ENCODE measurements at regions of chr16 and their contacts with region 1.

Region 1: GRCh38 chr16:75519881-75520280 is 16.0 kb downstream of the CHST5 start:
- DNase-seq: no peak
- ATAC-seq: no peak
- H3K4me3 ChIP-seq: no peak overlapping the region
- H3K4me3 Mint-ChIP-seq: no peak overlapping the region
- H3K27ac ChIP-seq: no peak overlapping the region
- H3K27ac Mint-ChIP-seq: no peak overlapping the region
- H3K4me1 ChIP-seq: peaks cover 4% of the 10 kb centered on the region
- H3K4me1 Mint-ChIP-seq: peaks cover 16% of the 10 kb centered on the region
- H3K27me3 ChIP-seq: no peaks in the 10 kb centered on the region
- H3K27me3 Mint-ChIP-seq: no peaks in the 10 kb centered on the region
- CTCF ChIP-seq: no peak

Region 2: GRCh38 chr16:75148311-75149195 is 371.3 kb before region 1 on chr16 and contains the start of gene ZFP1:
- CTCF ChIA-PET with region 1: no interaction called
- POLR2A ChIA-PET with region 1: no interaction called
- intact Hi-C with region 1: loop called in 1 of 2 experiments (anchors 2 kb)
- DNase-seq: peak; percentile 86 to 98 (median 95)
- ATAC-seq: peak; percentile 89
- H3K4me3 ChIP-seq: peak within 1 kb of the TSS; percentile 85 to 100
- H3K4me3 Mint-ChIP-seq: peak within 1 kb of the TSS; percentile 87
- H3K27ac ChIP-seq: peak within 1 kb of the TSS; percentile 84
- H3K27ac Mint-ChIP-seq: peak within 1 kb of the TSS; percentile 88
- H3K4me1 ChIP-seq: peaks cover 12% of the 10 kb centered on the region
- H3K4me1 Mint-ChIP-seq: peaks cover 16% of the 10 kb centered on the region
- H3K27me3 ChIP-seq: no peaks in the 10 kb centered on the region
- H3K27me3 Mint-ChIP-seq: no peaks in the 10 kb centered on the region
- CTCF ChIP-seq: no peak
- total RNA-seq, gene ZFP1: 11.9 to 12.9 TPM

Region 3: DNA sequence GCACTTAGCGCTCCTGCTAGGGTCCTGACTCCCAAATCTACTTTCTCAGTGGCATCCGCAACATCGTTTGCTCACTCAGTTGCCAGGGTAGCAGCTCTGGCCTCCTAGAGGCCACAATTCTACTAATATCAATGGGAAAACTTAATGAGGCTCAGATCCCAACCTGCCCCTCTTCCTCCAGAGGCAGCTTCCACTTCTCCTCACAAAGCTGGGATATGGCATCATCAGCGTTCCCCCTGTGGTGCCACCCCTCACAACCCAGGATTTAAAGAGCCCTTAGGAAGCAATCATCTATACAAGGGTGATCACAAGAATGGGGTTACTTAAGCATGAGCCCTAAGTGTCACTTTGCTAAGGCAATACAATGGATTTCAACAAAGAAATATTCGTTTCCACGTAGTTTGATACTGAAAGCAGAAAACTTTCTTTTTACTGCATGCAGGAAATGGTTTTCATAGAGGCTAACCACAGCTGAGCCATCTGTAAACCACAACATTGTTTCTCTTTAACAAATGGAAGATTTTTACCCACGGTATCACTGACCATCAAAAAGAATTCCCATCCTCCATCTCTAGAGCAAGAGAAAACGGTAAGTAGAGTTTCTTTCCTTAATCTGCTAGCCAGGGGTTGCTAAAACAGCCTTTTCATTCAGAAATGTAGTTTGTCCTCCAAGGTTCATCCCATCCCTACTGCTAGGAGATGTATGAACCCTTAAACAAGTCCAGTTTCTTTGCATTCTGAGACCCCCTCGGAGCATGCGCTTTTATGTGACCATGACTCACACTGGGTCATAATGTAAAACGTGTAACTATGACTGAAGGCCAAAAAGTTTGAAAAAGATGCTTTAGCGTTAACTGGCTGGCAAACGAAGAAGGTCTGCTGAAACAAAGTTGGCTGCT is 200.1 kb before region 1 on chr16:
- CTCF ChIA-PET with region 1: no interaction called
- POLR2A ChIA-PET with region 1: no interaction called
- intact Hi-C with region 1: no loop called
- DNase-seq: peak in 2 of 9 experiments; percentile 20 to 45
- ATAC-seq: no peak
- H3K4me3 ChIP-seq: peak overlapping the region; percentile 21 to 28
- H3K4me3 Mint-ChIP-seq: peak overlapping the region; percentile 65
- H3K27ac ChIP-seq: no peak overlapping the region
- H3K27ac Mint-ChIP-seq: no peak overlapping the region
- H3K4me1 ChIP-seq: peaks cover 18% of the 10 kb centered on the region
- H3K4me1 Mint-ChIP-seq: peaks cover 31% of the 10 kb centered on the region
- H3K27me3 ChIP-seq: peaks cover 0 to 2% of the 10 kb centered on the region in 2 experiments
- H3K27me3 Mint-ChIP-seq: no peaks in the 10 kb centered on the region
- CTCF ChIP-seq: no peak

Region 4: DNA sequence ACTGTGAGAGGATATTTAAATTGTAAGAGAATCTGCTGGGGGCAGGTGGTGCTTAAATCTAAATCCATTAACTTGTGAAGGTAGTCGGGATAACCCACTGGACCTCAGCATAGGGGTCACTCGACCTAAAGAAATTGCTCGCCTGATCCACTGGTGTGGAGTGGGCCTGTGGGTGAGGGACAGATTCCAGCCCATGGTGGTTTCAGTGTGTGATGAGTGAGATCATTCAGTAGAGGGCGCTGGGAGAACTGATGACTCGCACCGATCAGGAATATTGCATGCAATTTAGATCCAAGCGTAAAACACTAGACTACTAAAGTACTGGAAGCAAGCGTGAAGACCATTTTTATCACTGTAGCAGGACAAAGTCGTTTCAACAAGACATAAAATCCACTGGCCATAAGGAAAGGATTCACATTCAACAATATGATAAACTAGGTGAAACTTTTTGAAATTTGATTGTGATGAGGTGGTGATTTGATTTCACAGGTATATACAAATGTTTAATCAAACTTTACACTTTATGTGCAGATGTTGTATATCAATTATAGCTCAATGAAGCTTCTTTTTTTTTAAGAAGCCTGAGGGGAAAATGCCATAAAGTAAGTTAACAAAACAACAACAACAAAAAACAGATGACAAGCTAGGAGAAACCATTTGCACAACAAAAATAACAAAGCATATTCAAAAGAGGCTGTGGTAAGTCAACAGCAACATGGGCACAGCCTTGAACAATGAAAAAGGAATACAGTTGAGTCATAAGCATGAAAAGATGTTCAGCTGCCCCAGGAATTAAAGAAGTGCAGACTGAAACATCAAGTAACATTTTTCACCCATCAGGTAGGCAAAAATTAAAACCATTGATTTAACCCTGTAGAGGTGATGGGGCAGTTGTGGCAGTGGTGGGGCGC is 47.9 kb before region 1 on chr16:
- CTCF ChIA-PET with region 1: interaction called, 13 read pairs
- POLR2A ChIA-PET with region 1: no interaction called
- intact Hi-C with region 1: no loop called
- DNase-seq: peak in 7 of 9 experiments; percentile 17 to 71 (median 47)
- ATAC-seq: peak; percentile 83
- H3K4me3 ChIP-seq: no peak overlapping the region
- H3K4me3 Mint-ChIP-seq: no peak overlapping the region
- H3K27ac ChIP-seq: no peak overlapping the region
- H3K27ac Mint-ChIP-seq: no peak overlapping the region
- H3K4me1 ChIP-seq: no peaks in the 10 kb centered on the region
- H3K4me1 Mint-ChIP-seq: no peaks in the 10 kb centered on the region
- H3K27me3 ChIP-seq: no peaks in the 10 kb centered on the region
- H3K27me3 Mint-ChIP-seq: peaks cover 6% of the 10 kb centered on the region
- CTCF ChIP-seq: peak; percentile 54

Region 5: GRCh38 chr16:75555707-75556430 is 36.0 kb after region 1 on chr16 and contains the start of gene TMEM231:
- CTCF ChIA-PET with region 1: interaction called, 11 read pairs
- POLR2A ChIA-PET with region 1: no interaction called
- intact Hi-C with region 1: loop called (anchors 1 to 2 kb)
- DNase-seq: peak; percentile 95 to 98 (median 97)
- ATAC-seq: peak; percentile 96
- H3K4me3 ChIP-seq: peak within 1 kb of the TSS; percentile 61 to 69
- H3K4me3 Mint-ChIP-seq: peak within 1 kb of the TSS; percentile 86
- H3K27ac ChIP-seq: peak within 1 kb of the TSS; percentile 65 to 70
- H3K27ac Mint-ChIP-seq: peak within 1 kb of the TSS; percentile 88
- H3K4me1 ChIP-seq: peaks cover 12% of the 10 kb centered on the region
- H3K4me1 Mint-ChIP-seq: peaks cover 14% of the 10 kb centered on the region
- H3K27me3 ChIP-seq: no peaks in the 10 kb centered on the region
- H3K27me3 Mint-ChIP-seq: peaks cover 9% of the 10 kb centered on the region
- CTCF ChIP-seq: no peak
- total RNA-seq, gene TMEM231: 2.1 to 2.8 TPM

Region 6: GRCh38 chr16:75566040-75566810 is 46.3 kb after region 1 on chr16 and contains the start of gene GABARAPL2:
- CTCF ChIA-PET with region 1: interaction called, 22 read pairs
- POLR2A ChIA-PET with region 1: interaction called, 6 read pairs
- intact Hi-C with region 1: loop called (anchors 1 kb)
- DNase-seq: peak; percentile 84 to 96 (median 91)
- ATAC-seq: peak; percentile 72
- H3K4me3 ChIP-seq: peak within 1 kb of the TSS; percentile 87 to 98
- H3K4me3 Mint-ChIP-seq: peak within 1 kb of the TSS; percentile 94
- H3K27ac ChIP-seq: peak within 1 kb of the TSS; percentile 81 to 90
- H3K27ac Mint-ChIP-seq: peak within 1 kb of the TSS; percentile 97
- H3K4me1 ChIP-seq: peaks cover 12% of the 10 kb centered on the region
- H3K4me1 Mint-ChIP-seq: peaks cover 46% of the 10 kb centered on the region
- H3K27me3 ChIP-seq: peaks cover 0 to 3% of the 10 kb centered on the region in 2 experiments
- H3K27me3 Mint-ChIP-seq: peaks cover 15% of the 10 kb centered on the region
- CTCF ChIP-seq: no peak
- total RNA-seq, gene GABARAPL2: 37.4 to 39.4 TPM

Region 7: GRCh38 chr16:75622761-75623605 is 103.1 kb after region 1 on chr16 and contains the start of gene ADAT1:
- CTCF ChIA-PET with region 1: interaction called, 20 read pairs
- POLR2A ChIA-PET with region 1: interaction called, 8 read pairs
- intact Hi-C with region 1: loop called (anchors 1 to 5 kb)
- DNase-seq: peak; percentile 94 to 100 (median 98)
- ATAC-seq: peak; percentile 85
- H3K4me3 ChIP-seq: peak within 1 kb of the TSS; percentile 90 to 97
- H3K4me3 Mint-ChIP-seq: peak within 1 kb of the TSS; percentile 98
- H3K27ac ChIP-seq: peak within 1 kb of the TSS; percentile 89 to 98
- H3K27ac Mint-ChIP-seq: peak within 1 kb of the TSS; percentile 98
- H3K4me1 ChIP-seq: peaks cover 36% of the 10 kb centered on the region
- H3K4me1 Mint-ChIP-seq: peaks cover 58% of the 10 kb centered on the region
- H3K27me3 ChIP-seq: no peaks in the 10 kb centered on the region
- H3K27me3 Mint-ChIP-seq: no peaks in the 10 kb centered on the region
- CTCF ChIP-seq: no peak
- total RNA-seq, gene ADAT1: 44.4 to 47.6 TPM

Region 8: DNA sequence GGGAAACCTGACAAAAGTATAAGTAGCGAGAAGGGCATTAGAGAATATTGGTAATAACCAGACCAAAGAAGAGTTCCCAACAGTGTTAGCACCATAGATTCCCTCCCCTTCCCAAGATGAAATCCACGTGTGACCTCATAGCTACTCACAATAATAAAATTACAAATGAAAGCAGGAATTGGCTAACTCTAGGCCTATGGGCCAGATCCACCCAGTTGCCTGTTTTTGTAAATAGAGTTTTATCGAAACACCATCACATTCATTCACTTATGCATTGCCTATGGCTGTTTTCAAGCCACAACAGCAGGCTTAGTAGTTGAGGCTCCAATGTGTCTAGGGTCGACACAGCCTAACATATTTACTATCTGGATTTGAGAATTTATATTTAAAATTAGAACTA is 198.6 kb after region 1 on chr16:
- CTCF ChIA-PET with region 1: no interaction called
- POLR2A ChIA-PET with region 1: no interaction called
- intact Hi-C with region 1: no loop called
- DNase-seq: no peak
- ATAC-seq: no peak
- H3K4me3 ChIP-seq: no peak overlapping the region
- H3K4me3 Mint-ChIP-seq: no peak overlapping the region
- H3K27ac ChIP-seq: no peak overlapping the region
- H3K27ac Mint-ChIP-seq: no peak overlapping the region
- H3K4me1 ChIP-seq: no peaks in the 10 kb centered on the region
- H3K4me1 Mint-ChIP-seq: no peaks in the 10 kb centered on the region
- H3K27me3 ChIP-seq: no peaks in the 10 kb centered on the region
- H3K27me3 Mint-ChIP-seq: peaks cover 21% of the 10 kb centered on the region
- CTCF ChIP-seq: no peak

Region 9: GRCh38 chr16:75764154-75764768 is 244.4 kb after region 1 on chr16:
- CTCF ChIA-PET with region 1: interaction called, 3 read pairs
- POLR2A ChIA-PET with region 1: no interaction called
- intact Hi-C with region 1: loop called in 1 of 2 experiments (anchors 5 kb)
- DNase-seq: peak; percentile 24 to 83 (median 53)
- ATAC-seq: peak; percentile 99
- H3K4me3 ChIP-seq: no peak overlapping the region
- H3K4me3 Mint-ChIP-seq: no peak overlapping the region
- H3K27ac ChIP-seq: no peak overlapping the region
- H3K27ac Mint-ChIP-seq: no peak overlapping the region
- H3K4me1 ChIP-seq: no peaks in the 10 kb centered on the region
- H3K4me1 Mint-ChIP-seq: no peaks in the 10 kb centered on the region
- H3K27me3 ChIP-seq: no peaks in the 10 kb centered on the region
- H3K27me3 Mint-ChIP-seq: peaks cover 2% of the 10 kb centered on the region
- CTCF ChIP-seq: peak; percentile 83

Measured in CD8-positive, alpha-beta T cell (primary cell).